Lower leg skin (tissue), 4 donors: ENCODE measurements at regions of chr1 and their contacts with region 1.

Region 1: DNA sequence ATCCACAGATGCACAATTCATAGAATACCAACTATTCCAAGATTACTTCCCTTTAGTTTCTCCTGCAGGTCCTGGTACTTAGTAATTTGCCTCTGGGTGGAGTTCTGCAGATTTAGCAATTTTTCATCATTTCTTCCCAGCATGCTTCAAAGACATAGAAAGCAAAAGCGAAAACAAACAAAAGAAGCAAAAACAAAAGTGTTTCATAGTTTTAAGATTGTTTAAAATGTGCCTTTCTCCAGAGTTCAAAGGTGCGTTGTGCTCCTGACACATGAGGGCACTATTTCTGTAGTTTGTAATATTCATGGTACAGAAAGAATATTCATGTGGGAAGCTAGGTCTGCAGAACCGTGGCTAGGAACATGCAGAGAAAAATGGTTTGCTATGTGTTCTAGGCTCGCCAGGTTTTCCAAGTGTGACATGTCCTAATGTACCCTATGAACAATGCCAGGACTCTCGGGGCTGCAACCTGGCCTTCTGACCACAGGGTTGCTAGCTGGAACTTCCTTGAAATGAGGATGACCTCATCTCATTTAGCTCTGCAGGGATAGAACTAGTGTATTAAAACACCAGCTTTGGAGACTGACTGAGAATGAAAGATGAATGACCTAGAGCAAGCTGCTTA is 30.0 kb upstream of the RCSD1 start:
- DNase-seq: peak; percentile 29 to 83
- H3K4me3 ChIP-seq: no peak overlapping the region
- CTCF ChIP-seq: no peak
- POLR2A ChIP-seq: no peak

Region 2: GRCh38 chr1:167687919-167688519 is 88.0 kb after region 1 on chr1:
- intact Hi-C with region 1: loop called (anchors 2 kb)
- DNase-seq: peak; percentile 89 to 90
- H3K4me3 ChIP-seq: no peak overlapping the region
- CTCF ChIP-seq: peak in 1 of 3 donors; percentile 67
- POLR2A ChIP-seq: no peak

Region 3: DNA sequence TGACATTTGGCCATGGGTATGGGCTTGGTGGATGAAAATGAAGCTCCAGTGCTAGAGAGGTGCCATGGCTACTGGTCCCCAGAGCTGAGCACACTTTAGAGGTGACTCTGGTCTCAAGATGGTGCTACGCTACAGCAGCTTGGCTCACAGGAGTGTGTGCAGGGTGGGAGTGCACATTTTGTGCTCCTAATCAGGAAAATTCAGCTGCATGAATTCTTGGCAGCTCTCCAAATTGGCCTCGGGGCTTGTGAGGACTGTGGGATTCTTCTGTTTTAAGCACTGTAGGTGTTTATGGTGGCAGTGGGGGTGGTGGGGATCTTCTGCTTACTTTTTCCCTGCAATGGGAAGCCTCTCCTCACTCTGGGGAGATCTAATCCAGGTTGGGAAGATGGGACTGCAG is 561.4 kb after region 1 on chr1:
- intact Hi-C with region 1: no loop called
- DNase-seq: no peak
- H3K4me3 ChIP-seq: no peak overlapping the region
- CTCF ChIP-seq: no peak
- POLR2A ChIP-seq: no peak